G401 (cell line): ENCODE measurements at regions of chr6 and their contacts with region 1.

Region 1: DNA sequence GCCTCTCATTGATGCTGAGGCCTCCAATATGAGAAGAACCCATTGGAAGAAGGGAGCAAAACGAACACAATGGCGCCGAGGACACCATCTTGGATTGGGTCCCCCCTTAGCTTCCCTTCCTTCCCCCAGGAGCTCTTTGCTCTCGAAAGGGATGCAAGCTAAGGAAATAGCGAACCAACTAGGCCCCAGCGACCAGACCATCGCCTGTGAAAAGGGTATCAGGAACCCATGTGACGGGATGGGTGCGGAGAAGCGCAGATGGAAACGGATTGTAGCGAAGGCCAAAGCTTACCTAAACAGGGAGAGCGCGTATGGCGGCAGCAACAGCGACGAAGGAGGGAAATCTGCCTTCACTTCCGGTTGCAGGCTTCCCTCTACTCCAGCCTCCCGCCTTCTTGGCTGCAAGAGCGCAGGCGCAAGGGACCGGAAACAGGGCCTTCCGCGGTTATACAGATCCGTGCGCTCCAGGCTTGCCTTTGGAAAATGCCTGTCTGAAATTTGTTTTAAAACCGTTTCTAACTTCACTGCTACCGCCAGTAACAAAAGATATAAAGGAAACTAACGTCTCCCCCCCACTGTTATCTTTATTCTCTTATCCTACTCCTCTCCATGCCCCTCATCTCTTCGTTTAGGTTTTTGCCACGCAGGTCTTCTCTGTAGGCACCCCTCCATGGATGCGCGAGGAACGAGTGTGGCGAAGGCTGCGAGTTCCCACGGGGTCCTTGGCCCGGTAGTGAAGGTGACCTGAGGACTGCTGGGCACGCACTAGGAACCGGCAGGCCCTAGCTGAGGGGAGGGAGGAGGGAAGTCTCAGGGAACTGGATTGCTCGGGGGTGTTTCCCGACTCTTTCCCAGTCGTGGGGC is at the start of gene DDX39B:
- DNase-seq: peak; percentile 98
- total RNA-seq, gene DDX39B: 771 and 792 TPM in 2 replicates

Region 2: GRCh38 chr6:31094389-31094881 is 447.5 kb before region 1 on chr6:
- in situ Hi-C with region 1: no loop called
- DNase-seq: peak; percentile 96

Region 3: DNA sequence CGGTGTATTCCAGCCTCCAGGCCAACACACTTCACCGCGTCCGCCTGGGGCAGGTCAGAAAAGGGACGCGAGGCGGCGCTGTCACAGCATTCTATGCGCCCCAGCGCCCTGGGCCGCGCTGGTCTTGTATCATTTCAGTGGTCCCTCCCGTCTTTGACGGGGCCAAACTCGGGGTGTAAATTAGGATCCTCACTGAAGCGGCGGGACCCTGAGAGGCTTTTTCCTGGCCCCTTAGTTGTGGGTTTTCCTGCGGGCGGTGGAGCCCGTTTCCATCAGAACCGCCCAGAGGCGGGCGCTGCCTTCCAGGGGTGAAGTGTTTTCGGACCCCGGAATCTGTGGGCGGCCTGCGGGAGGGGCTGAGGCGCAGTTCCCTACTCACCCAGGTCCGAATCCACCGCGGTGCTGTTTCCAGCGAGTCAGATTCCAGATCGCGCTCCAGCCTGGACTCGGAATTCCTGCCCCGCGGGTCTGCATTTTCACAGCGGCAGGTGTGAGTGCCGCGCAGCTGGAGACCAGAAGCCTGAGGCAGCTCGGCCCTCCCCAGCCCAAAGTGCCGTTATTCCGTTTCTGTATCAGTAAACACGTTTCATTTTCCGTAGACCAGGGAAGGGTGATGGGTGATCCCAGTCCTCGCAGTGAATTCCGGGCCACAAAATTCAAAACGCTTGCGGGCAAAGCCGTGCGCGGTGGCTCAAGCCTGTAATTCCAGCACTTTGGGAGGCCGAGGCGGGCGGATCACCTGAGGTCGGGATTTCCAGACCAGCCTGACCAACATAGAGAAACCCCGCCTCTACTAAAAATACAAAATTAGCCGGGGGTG is 47.8 kb before region 1 on chr6:
- in situ Hi-C with region 1: no loop called
- DNase-seq: peak; percentile 76

Region 4: GRCh38 chr6:31580807-31581433 is 39.0 kb after region 1 on chr6:
- in situ Hi-C with region 1: loop called (anchors 5 kb)
- DNase-seq: peak; percentile 79